AG04449 (cell line): ENCODE measurements at regions of chr4 and their contacts with region 1.

Region 1: GRCh38 chr4:140851032-140851636 is 94.9 kb upstream of the TBC1D9 start:
- DNase-seq: no peak
- H3K4me3 ChIP-seq: no peak overlapping the region
- CTCF ChIP-seq: peak; percentile 63

Region 2: DNA sequence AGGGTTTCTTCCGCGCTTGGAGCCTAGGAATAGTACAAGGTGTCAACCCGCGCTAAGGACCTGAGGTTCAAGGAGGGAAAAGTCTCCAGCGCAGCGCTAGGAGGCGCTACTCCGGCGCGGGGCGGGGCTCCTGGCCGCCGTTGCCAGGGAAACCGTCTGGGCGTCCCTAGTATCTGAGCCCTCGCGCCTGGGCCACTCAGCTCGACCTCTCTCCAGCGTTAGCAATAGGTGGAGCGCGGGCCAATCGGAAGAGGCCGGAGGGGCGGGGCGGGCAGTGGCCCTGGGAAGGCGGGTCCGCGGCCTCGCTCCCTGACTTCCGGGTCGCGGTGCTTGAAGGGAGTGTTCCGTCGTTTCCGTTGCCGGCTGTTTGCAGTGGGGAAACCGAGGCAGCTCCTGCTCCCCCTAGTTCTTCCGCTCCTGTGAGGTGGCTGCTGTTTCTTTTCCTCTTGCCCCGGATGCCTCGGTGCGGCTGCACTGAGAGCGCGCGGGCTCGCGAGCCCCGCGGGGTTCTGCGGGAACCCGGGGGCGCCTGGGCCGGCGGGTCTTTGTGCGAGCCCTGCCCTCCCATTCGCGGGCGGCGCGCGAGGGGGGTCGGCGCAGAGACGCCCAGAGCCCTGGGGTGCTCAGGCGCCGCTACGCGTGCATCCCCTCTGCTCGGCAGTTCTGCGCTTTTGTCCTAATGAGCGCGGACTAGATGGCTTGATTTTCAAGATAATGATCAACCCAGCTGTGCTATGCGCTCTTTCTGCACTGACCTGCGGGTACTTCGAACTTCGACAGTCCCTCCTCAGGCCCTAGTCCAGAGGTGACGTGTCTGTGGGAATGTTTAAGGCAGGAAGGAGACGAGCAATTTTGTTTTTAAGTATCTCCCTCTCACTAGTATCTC is 327.0 kb before region 1 on chr4 and contains the start of gene ELMOD2:
- CTCF ChIA-PET with region 1: interaction called, 12 read pairs
- POLR2A ChIA-PET with region 1: no interaction called
- DNase-seq: peak; percentile 65
- H3K4me3 ChIP-seq: peak within 1 kb of the TSS; percentile 86
- CTCF ChIP-seq: peak; percentile 94

Region 3: GRCh38 chr4:140609548-140610425 is 241.3 kb before region 1 on chr4:
- CTCF ChIA-PET with region 1: interaction called, 40 read pairs
- POLR2A ChIA-PET with region 1: no interaction called
- DNase-seq: no peak
- H3K4me3 ChIP-seq: no peak overlapping the region
- CTCF ChIP-seq: peak; percentile 33

Region 4: DNA sequence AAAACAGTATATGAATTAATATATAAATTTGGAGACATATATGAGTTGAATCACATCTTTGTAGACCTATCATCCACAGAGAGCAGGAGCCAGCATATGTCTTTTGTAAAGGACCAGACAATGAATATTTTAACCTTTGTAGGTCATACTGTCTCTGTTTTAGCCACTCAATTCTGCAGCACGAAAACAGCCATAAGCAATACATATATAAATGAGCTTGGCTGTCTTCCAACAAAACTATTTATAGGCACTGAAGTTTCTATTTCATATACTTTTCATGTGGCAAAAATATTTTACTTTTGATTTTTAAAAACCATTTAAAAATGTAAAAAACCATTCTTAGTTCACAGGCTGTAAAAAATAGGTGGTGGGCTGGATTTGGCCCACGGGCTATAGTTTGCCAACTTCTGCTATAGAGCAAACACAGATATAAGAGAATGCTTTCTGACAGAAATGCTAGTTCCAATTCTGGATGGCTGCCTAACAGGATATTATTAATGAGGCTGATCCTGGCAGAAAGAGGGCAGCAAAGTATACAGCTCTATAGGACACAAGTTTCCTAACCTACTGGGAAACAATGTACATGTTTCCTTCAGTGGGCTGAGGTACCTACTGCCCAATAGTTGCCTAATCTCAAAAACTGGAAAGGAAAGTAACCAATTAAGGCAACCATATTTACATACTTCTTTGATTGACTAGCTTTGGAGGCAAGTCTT is 224.3 kb before region 1 on chr4:
- CTCF ChIA-PET with region 1: interaction called, 33 read pairs
- POLR2A ChIA-PET with region 1: no interaction called
- DNase-seq: no peak
- H3K4me3 ChIP-seq: no peak overlapping the region
- CTCF ChIP-seq: no peak

Region 5: GRCh38 chr4:140861359-140862176 is 10.4 kb after region 1 on chr4:
- CTCF ChIA-PET with region 1: interaction called, 17 read pairs
- POLR2A ChIA-PET with region 1: no interaction called
- DNase-seq: peak; percentile 67
- H3K4me3 ChIP-seq: no peak overlapping the region
- CTCF ChIP-seq: peak; percentile 48

Region 6: DNA sequence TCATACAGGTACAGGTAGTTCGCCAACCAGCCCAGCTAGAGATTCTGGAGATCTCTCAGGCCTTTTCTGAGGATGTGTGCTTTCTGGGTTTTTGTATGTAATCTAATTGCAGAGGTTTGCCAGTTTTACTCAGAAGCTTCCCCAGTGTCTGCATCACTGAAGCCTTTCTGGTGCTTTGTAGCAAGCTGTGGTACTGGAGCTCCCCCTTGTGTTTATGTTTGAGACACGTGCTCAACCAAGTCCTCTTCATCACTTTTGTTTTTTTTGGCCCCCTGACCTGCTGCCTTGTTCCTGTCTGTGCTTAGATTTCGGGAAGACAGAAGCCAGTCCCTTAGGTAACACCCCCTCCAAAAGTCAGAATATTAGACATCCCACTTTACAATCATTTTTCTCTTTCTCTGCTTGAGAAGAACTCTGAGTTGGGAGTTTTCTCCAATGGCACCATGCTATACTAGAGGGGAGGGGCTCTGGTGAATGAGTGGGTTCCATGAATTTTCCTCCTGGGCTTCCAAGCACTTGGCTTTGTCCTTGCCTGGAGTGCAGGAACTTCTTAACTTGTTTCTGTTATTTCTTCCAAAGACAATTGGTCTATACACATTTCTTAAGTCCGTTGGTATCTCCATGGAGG is 33.4 kb after region 1 on chr4:
- CTCF ChIA-PET with region 1: interaction called, 10 read pairs
- POLR2A ChIA-PET with region 1: no interaction called
- DNase-seq: no peak
- H3K4me3 ChIP-seq: no peak overlapping the region
- CTCF ChIP-seq: peak; percentile 68

Region 7: DNA sequence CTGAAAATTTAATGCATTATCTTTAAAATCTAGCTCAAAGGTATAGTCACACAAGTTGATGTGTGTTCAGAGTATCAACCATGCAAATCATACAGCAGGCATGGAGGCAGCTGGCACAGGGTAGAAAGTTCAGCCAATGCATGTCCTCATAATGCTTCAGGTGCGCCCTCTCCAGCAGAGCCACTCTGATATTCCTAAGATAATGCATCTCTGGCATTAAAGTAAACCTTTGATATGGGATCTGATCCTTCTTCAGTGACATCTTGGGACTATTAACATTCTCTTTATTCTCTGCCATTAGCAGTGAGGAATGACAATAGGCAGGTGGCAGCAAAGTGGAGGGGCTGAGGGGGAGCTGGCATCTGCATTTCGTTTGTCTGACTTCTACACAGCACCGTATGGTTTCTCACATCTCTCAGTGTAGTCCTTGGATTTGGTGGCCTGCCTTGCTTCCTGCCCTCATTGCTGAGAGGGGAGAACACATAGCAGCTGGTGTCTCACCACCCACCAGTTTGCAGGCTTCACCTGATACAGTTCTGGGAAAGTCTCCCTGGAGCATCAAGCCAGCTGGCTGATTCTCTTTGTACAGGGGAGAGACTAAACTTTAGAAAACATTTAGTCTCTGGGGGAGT is 73.7 kb after region 1 on chr4:
- CTCF ChIA-PET with region 1: no interaction called
- POLR2A ChIA-PET with region 1: no interaction called
- DNase-seq: no peak
- H3K4me3 ChIP-seq: no peak overlapping the region
- CTCF ChIP-seq: no peak